ENCODE measurements at regions of chr6 and their contacts with region 1.

Region 1: GRCh38 chr6:3751730-3752542 is 423 bp upstream of the PXDC1 start:
- DNase-seq: peak; percentile 88
- ATAC-seq: peak; percentile 54
- H3K4me3 ChIP-seq: peak overlapping the region; percentile 80
- H3K27ac ChIP-seq: peak overlapping the region; percentile 70; the same call in 1 of the 2 replicates
- H3K4me1 ChIP-seq: peaks cover 23% of the 10 kb centered on the region
- H3K27me3 ChIP-seq: no peaks in the 10 kb centered on the region
- CTCF ChIP-seq: peak; percentile 28; the same call in 1 of the 2 replicates

Region 2: DNA sequence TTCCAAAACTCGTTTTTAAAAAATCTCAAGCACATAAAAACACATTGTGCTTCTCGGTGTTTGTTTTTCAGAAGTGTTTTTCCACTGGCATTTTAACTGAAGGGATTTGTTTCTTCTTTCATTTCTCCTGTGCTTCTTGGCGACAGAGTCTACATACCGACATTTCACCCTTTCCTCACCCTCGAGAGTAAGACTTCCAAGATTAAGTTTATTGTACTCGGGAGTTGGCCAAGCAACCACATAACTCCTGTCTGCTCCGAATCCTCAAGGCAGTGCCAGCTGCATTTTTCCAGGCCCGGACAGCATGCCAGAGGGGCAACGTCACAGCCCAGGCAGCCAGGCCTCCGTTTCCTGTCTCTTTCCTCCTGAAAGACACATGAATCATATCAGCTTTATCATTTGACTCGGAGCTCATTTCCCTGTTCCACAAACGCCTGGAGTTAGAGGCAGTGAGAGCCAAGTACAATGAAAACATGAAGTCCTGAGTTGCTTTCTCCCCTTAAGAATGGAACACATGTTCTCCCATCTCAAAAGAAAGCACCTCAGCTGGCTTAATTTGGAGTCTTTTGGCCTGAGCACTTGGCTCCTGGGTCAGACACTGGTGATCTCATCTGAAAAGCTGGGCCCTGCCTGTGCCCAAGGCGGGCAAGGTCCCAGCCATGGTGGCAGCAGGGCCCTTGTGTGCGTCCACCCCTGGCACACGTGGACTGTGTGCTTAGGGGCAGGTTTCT is 74.1 kb after region 1 on chr6:
- CTCF ChIA-PET with region 1: interaction called, 9 read pairs
- POLR2A ChIA-PET with region 1: interaction called, 5 read pairs
- intact Hi-C with region 1: loop called (anchors 1 kb)
- DNase-seq: peak; percentile 97
- ATAC-seq: peak; percentile 94
- H3K4me3 ChIP-seq: peak overlapping the region; percentile 38; the same call in 1 of the 2 replicates
- H3K27ac ChIP-seq: peak overlapping the region; percentile 84
- H3K4me1 ChIP-seq: peaks cover 45% of the 10 kb centered on the region
- H3K27me3 ChIP-seq: no peaks in the 10 kb centered on the region
- CTCF ChIP-seq: no peak

Region 3: GRCh38 chr6:3887150-3887700 is 135.3 kb after region 1 on chr6:
- CTCF ChIA-PET with region 1: interaction called, 3 read pairs
- POLR2A ChIA-PET with region 1: no interaction called
- intact Hi-C with region 1: loop called (anchors 2 kb)
- DNase-seq: peak; percentile 36
- ATAC-seq: no peak
- H3K4me3 ChIP-seq: no peak overlapping the region
- H3K27ac ChIP-seq: peak overlapping the region; percentile 89
- H3K4me1 ChIP-seq: peaks cover 46% of the 10 kb centered on the region
- H3K27me3 ChIP-seq: no peaks in the 10 kb centered on the region
- CTCF ChIP-seq: peak; percentile 48

Region 4: GRCh38 chr6:3929281-3929798 is 177.4 kb after region 1 on chr6:
- CTCF ChIA-PET with region 1: interaction called, 5 read pairs
- POLR2A ChIA-PET with region 1: no interaction called
- intact Hi-C with region 1: loop called (anchors 1 kb)
- DNase-seq: no peak
- ATAC-seq: no peak
- H3K4me3 ChIP-seq: no peak overlapping the region
- H3K27ac ChIP-seq: no peak overlapping the region
- H3K4me1 ChIP-seq: peaks cover 5% of the 10 kb centered on the region; the same call in 1 of the 2 replicates
- H3K27me3 ChIP-seq: no peaks in the 10 kb centered on the region
- CTCF ChIP-seq: no peak

Region 5: GRCh38 chr6:4041480-4041879 is 289.5 kb after region 1 on chr6:
- CTCF ChIA-PET with region 1: no interaction called
- POLR2A ChIA-PET with region 1: no interaction called
- intact Hi-C with region 1: no loop called
- DNase-seq: no peak
- ATAC-seq: no peak
- H3K4me3 ChIP-seq: no peak overlapping the region
- H3K27ac ChIP-seq: no peak overlapping the region
- H3K4me1 ChIP-seq: no peaks in the 10 kb centered on the region
- H3K27me3 ChIP-seq: no peaks in the 10 kb centered on the region
- CTCF ChIP-seq: no peak